ENCODE measurements at regions of chr12 and their contacts with region 1.

Region 1: GRCh38 chr12:67966560-67966959 is 22.7 kb upstream of the IFNG-AS1 start:
- DNase-seq: no peak
- ATAC-seq: no peak
- H3K4me3 Mint-ChIP-seq: no peak overlapping the region
- H3K27ac Mint-ChIP-seq: no peak overlapping the region
- H3K4me1 Mint-ChIP-seq: peaks cover 19% of the 10 kb centered on the region
- H3K27me3 Mint-ChIP-seq: no peaks in the 10 kb centered on the region
- CTCF ChIP-seq: no peak

Region 2: DNA sequence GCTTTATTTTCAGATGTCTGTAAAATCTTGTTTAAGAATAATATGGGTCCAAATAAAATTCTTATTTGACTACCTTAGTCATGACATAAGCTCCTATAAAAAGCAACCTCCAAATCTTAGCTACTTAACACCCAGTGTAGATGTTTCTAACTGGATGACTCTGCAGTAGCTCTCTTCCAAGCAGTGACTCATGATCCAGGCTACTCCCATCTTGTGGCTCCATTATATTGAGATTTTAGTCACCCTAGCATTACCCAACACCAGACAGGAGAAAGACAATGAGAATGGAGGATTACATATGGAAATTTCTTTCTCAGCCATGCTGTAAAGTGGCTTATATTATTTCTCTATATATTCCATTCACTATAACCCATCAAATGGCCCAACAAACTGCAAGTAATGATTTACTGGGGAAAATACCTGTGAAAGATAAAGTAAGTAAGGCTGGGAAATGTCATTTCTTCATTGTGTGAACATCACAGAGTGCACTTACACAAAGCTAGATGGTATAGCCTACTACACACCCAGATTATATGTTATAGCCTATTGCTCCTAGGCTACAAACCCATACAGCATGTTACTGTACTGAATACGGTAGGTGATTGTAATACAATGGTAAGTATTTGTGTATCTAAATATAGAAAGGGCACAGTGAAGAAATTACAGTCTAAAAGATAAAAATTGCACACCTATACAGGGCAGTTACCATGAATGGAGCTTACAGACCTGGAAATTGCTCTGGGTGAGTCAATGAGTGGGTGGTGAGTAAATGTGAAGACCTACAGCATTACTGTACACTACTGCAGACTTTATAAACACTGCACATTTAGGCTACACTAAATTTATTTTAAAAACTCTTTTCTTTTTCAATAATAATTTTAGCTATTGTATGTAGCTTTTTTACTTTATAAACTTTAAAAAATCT is 154.9 kb before region 1 on chr12:
- CTCF ChIA-PET with region 1: no interaction called
- POLR2A ChIA-PET with region 1: no interaction called
- intact Hi-C with region 1: no loop called
- DNase-seq: no peak
- ATAC-seq: no peak
- H3K4me3 Mint-ChIP-seq: no peak overlapping the region
- H3K27ac Mint-ChIP-seq: no peak overlapping the region
- H3K4me1 Mint-ChIP-seq: no peaks in the 10 kb centered on the region
- H3K27me3 Mint-ChIP-seq: peaks cover 3% of the 10 kb centered on the region
- CTCF ChIP-seq: no peak

Region 3: DNA sequence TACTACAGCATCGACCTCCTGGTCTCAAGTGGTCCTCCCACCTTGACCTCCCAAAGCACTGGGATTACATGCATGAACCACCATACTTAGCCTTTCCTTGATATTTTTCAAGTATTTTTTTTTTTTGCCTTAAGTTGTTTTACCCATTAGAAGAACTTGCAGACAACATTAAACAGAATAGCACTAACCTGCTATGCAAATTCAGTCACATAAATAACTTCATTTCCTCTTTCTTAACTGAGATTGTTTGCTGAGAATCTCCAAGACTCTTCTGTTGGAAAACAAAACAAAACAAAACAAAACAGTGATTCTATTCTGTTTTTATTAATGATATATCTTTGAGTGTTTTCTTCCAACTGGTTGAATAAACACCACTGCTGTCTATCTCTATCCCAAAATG is 93.2 kb before region 1 on chr12:
- CTCF ChIA-PET with region 1: no interaction called
- POLR2A ChIA-PET with region 1: interaction called, 10 read pairs
- intact Hi-C with region 1: no loop called
- DNase-seq: no peak
- ATAC-seq: no peak
- H3K4me3 Mint-ChIP-seq: no peak overlapping the region
- H3K27ac Mint-ChIP-seq: no peak overlapping the region
- H3K4me1 Mint-ChIP-seq: peaks cover 19% of the 10 kb centered on the region
- H3K27me3 Mint-ChIP-seq: no peaks in the 10 kb centered on the region
- CTCF ChIP-seq: no peak

Measured in activated B cell treated with CpG ODN at 0.5 μM for 24 hours (primary cell).